Spleen (tissue), 13 donors: ENCODE measurements at regions of chr15 and their contacts with region 1.

Region 1: GRCh38 chr15:44593042-44593736 is 56.2 kb downstream of the EIF3J start:
- DNase-seq: no peak
- H3K4me3 ChIP-seq: no peak overlapping the region
- H3K27ac ChIP-seq: peak overlapping the region in 2 of 8 donors; percentile 15 to 20
- H3K4me1 ChIP-seq: peaks cover 0 to 14% (median 0%) of the 10 kb centered on the region in 6 donors
- H3K27me3 ChIP-seq: no peaks in the 10 kb centered on the region
- CTCF ChIP-seq: peak in 9 of 11 experiments; percentile 34 to 71 (median 50)
- POLR2A ChIP-seq: no peak

Region 2: GRCh38 chr15:44606740-44607139 is 13.6 kb after region 1 on chr15:
- intact Hi-C with region 1: no loop called
- DNase-seq: no peak
- H3K4me3 ChIP-seq: no peak overlapping the region
- H3K27ac ChIP-seq: no peak overlapping the region
- H3K4me1 ChIP-seq: no peaks in the 10 kb centered on the region
- H3K27me3 ChIP-seq: no peaks in the 10 kb centered on the region
- CTCF ChIP-seq: no peak
- POLR2A ChIP-seq: no peak

Region 3: DNA sequence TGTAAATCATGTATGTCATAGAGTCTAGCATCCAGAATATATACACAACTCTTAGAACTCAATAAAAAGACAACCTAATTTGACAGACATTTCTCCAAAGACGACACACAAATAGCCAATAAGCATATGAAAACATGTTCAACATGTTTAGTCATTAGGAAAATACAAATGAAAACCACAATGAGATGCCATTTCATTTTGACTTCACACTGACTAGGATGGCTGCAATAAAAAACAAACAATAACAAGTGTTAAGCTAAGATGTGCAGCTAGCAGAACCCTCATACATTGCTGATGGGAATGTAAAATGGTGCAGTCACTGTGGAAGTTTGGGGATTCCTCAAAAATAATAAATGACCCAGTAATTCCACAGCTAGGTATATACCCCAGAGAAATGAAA is 53.8 kb after region 1 on chr15:
- intact Hi-C with region 1: loop called (anchors 10 kb)
- DNase-seq: no peak
- H3K4me3 ChIP-seq: no peak overlapping the region
- H3K27ac ChIP-seq: no peak overlapping the region
- H3K4me1 ChIP-seq: peaks cover 0 to 84% (median 17%) of the 10 kb centered on the region in 6 donors
- H3K27me3 ChIP-seq: no peaks in the 10 kb centered on the region
- CTCF ChIP-seq: no peak
- POLR2A ChIP-seq: no peak

Region 4: GRCh38 chr15:44753345-44753744 is 160.2 kb after region 1 on chr15:
- intact Hi-C with region 1: loop called (anchors 10 kb)
- DNase-seq: no peak
- H3K4me3 ChIP-seq: no peak overlapping the region
- H3K27ac ChIP-seq: no peak overlapping the region
- H3K4me1 ChIP-seq: no peaks in the 10 kb centered on the region
- H3K27me3 ChIP-seq: no peaks in the 10 kb centered on the region
- CTCF ChIP-seq: no peak
- POLR2A ChIP-seq: no peak